Breast epithelium (tissue), 4 donors: ENCODE measurements at regions of chr5 and their contacts with region 1.

Region 1: DNA sequence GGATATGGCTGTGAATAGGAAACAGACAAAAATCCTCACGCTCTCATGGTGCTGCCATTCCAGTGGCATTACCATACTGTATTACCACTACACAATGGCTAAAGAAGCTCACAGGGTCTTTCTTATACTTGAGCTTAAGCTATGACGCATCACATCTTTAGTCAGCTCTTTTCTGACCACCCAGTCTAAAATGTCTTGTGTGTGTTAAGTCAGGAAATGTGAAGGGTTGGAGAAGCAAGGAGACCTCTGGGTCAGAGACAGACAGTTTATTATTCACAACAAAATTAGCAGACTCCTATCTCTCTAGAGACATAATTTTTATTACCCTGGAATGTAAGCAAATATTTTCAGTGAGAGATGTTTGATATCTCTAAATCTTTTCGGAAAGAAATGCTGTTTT is 1583.2 kb upstream of the WWC1 start:
- DNase-seq: no peak
- H3K4me3 ChIP-seq: no peak overlapping the region
- H3K27ac ChIP-seq: no peak overlapping the region
- H3K4me1 ChIP-seq: no peaks in the 10 kb centered on the region
- H3K27me3 ChIP-seq: no peaks in the 10 kb centered on the region
- CTCF ChIP-seq: no peak
- POLR2A ChIP-seq: no peak

Region 2: GRCh38 chr5:166758151-166758550 is 49.9 kb after region 1 on chr5:
- intact Hi-C with region 1: loop called (anchors 2 kb)
- DNase-seq: no peak
- H3K4me3 ChIP-seq: no peak overlapping the region
- H3K27ac ChIP-seq: no peak overlapping the region
- H3K4me1 ChIP-seq: no peaks in the 10 kb centered on the region
- H3K27me3 ChIP-seq: no peaks in the 10 kb centered on the region
- CTCF ChIP-seq: no peak
- POLR2A ChIP-seq: no peak

Region 3: DNA sequence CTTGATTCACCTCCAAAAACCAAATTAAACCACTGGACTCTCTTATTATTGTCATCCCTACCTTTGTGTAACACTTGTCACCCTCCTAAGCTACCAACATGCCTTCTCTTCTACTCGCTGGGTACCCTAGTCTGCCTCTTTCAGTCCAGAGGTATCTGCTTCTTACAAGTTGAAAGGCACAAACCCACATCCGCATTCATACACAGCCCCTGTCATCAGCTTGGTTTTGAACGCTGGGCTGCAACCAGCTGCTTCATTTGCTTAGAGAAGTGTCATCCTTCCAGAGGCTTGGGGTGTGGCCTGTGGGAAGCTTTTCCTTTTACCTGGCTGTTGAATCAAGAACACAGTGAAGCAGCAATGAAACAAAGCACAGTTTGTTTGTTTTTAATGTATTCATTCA is 1444.4 kb after region 1 on chr5:
- intact Hi-C with region 1: no loop called
- DNase-seq: no peak
- H3K4me3 ChIP-seq: no peak overlapping the region
- H3K27ac ChIP-seq: no peak overlapping the region
- H3K4me1 ChIP-seq: no peaks in the 10 kb centered on the region
- H3K27me3 ChIP-seq: no peaks in the 10 kb centered on the region
- CTCF ChIP-seq: no peak
- POLR2A ChIP-seq: no peak